ENCODE measurements at regions of chr18 and their contacts with region 1.

Region 1: GRCh38 chr18:27839141-27839540 is 337.8 kb downstream of the CDH2 start:
- DNase-seq: peak; percentile 94
- H3K4me3 ChIP-seq: no peak overlapping the region
- H3K27ac ChIP-seq: peak overlapping the region; percentile 43
- H3K4me1 ChIP-seq: peaks cover 37% of the 10 kb centered on the region
- H3K27me3 ChIP-seq: no peaks in the 10 kb centered on the region
- CTCF ChIP-seq: no peak

Region 2: GRCh38 chr18:27797484-27797883 is 41.7 kb before region 1 on chr18:
- CTCF ChIA-PET with region 1: no interaction called
- dilution Hi-C with region 1: loop called (anchors 5 kb)
- in situ Hi-C with region 1: no loop called
- intact Hi-C with region 1: no loop called
- DNase-seq: no peak
- H3K4me3 ChIP-seq: no peak overlapping the region
- H3K27ac ChIP-seq: no peak overlapping the region
- H3K4me1 ChIP-seq: no peaks in the 10 kb centered on the region
- H3K27me3 ChIP-seq: no peaks in the 10 kb centered on the region
- CTCF ChIP-seq: no peak

Region 3: DNA sequence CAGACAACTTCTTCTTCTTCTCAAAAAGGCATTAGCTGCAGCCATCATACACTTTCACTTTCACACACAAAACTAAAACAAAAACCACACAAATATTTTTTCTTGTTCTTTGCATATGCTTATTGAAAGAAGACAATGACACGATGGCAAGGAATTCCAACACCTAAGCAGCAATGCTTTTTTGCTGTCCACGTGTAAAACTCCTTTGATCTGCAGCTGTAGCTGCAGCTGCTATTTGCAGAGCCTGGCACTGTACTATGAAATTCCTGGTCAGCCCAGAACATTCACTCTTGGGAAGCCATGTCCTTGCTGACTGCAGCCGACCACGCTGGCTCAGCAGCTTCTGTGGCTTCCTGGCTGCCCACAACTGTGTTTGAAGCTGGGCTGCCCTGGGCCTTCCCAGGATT is 21.6 kb after region 1 on chr18:
- CTCF ChIA-PET with region 1: no interaction called
- dilution Hi-C with region 1: no loop called
- in situ Hi-C with region 1: no loop called
- intact Hi-C with region 1: loop called (anchors 1 kb)
- DNase-seq: peak; percentile 8
- H3K4me3 ChIP-seq: no peak overlapping the region
- H3K27ac ChIP-seq: no peak overlapping the region
- H3K4me1 ChIP-seq: peaks cover 18% of the 10 kb centered on the region
- H3K27me3 ChIP-seq: no peaks in the 10 kb centered on the region
- CTCF ChIP-seq: no peak